Activated T-helper 1 cell treated with anti-CD3 and anti-CD28 coated beads, Interleukin-12 subunit alpha, Interleukin-12 subunit beta, Interleukin-2, Interleukin-4 antibody, amounts not matched to agents 30 ng/mL and 10 ng/mL and 1 ng/mL, durations not matched to agents 14 hours and 24 hours and 36 hours (primary cell): ENCODE measurements at regions of chr5 and their contacts with region 1.

Region 1: DNA sequence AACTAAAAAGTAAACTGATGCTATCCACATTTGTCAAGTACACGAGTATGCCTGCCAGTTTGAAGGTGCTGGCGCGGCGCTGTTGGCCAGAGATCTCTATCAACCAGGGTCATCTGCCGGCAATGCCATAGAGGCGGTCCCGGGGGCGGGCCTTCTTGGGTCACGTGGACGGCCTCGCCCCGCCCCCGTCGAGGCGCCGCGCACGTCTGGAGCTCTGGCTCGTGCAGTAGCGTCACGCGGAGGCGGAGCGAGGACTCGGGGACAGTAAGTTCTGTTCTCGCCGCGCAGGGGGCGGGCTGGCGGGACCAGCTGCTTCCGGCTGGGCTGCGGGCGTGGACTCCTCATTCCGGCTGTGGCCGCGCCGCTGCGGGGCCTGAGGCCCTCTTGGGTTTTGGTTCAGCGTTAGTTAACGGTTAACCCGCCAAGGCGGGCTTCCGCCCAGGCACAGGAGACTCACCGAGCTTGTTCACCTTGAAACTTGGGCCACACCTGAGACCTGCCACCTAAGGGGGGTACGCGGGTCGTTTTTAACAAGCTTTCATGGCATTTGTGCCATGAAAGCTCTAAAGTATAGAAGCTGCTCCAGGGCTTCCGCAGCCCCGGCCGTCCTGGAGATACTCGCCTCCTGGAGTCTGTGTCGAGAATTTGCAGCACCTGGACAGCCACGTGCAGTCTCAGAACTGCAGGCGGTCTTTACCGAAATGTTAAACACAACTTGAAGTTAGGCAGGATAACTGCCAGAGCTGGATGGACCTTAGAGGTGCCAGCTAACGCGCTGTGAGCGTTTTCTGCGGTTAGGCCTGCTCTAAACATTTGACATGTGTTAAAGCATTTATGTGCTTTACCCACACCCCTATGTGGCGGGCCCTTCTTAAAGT is at the start of gene RFESD:
- DNase-seq: peak; percentile 94
- H3K4me3 Mint-ChIP-seq: peak within 1 kb of the TSS; percentile 76
- H3K27ac Mint-ChIP-seq: peak within 1 kb of the TSS; percentile 75
- H3K4me1 Mint-ChIP-seq: peaks cover 27% of the 10 kb centered on the region
- H3K27me3 Mint-ChIP-seq: peaks cover 3% of the 10 kb centered on the region
- total RNA-seq, gene RFESD: 3.0 and 6.0 TPM in 2 replicates

Region 2: DNA sequence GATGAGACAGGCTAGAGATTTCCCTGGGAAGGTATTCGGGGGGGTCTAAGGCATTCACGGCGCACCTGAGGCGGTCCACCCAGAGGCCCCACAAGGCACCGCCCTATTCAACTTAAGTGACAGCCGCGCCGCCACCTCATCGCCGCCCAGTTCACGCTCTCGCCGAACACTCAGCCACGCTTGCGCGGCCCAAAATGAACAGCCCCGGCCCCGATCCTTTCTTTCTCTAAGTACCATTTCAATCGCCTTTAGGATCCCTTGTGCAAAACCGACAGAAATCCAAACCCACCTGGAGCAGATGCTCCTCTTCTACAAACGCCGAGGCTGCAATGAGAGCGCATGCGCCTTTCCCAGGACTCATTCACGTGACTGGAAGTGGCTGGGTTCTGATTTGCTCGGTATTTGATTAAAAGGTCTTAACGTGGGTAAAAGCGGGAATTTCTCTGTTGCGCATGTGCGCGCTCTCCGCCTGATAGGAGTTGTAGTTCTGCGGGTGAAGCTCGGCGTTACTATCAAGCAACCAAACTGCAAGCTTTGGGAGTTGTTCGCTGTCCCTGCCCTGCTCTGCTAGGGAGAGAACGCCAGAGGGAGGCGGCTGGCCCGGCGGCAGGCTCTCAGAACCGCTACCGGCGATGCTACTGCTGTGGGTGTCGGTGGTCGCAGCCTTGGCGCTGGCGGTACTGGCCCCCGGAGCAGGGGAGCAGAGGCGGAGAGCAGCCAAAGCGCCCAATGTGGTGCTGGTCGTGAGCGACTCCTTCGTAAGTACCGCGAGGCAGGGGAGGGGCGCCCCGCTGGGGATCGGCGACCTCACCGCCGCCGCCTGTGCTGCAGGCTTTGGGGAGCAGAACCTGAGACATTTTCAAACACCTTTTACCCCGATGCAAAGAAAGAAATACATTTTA is 91.9 kb before region 1 on chr5 and contains the starts of genes ARSK and SKIC3:
- intact Hi-C with region 1: loop called (anchors 1 kb)
- DNase-seq: peak; percentile 90
- H3K4me3 Mint-ChIP-seq: peak within 1 kb of the TSS; percentile 94
- H3K27ac Mint-ChIP-seq: peak within 1 kb of the TSS; percentile 94
- H3K4me1 Mint-ChIP-seq: peaks cover 39% of the 10 kb centered on the region
- H3K27me3 Mint-ChIP-seq: no peaks in the 10 kb centered on the region
- total RNA-seq, gene ARSK: 3.9 and 4.2 TPM in 2 replicates
- total RNA-seq, gene SKIC3: 60.2 and 63.8 TPM in 2 replicates

Region 3: DNA sequence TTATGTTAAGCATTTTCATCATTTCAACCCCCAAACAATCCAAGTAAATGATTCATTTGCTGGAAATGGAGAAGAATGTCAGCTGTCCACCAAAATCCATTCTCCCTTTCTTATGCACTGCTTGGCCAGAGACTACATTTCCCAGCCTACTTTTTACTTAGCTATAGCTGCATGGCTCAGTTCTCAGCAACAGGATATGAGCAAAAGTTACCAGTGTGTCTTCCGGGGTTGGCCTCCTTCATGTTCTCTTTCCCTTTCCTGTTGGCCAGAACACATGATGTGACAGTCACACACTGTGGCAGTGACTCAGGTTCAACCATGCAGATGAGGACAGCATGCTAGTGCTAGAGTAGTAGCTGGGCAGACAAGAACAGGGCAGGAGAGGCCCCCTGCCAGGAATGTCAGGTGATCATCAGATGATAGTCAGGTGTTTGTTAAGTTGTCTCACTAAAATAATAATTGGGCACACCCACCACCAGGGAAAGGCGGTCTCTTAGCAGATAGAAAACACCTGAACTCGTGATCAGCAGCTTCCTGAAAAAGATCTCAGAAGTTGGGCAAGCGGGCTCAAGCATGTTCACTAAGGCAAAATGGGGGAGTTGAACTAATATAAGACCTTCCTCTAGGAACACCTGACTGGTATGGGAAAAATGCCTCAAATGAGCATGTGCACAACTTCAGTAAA is 14.7 kb before region 1 on chr5:
- intact Hi-C with region 1: loop called (anchors 1 kb)
- DNase-seq: peak; percentile 59
- H3K4me3 Mint-ChIP-seq: peak overlapping the region; percentile 4
- H3K27ac Mint-ChIP-seq: peak overlapping the region; percentile 83
- H3K4me1 Mint-ChIP-seq: peaks cover 13% of the 10 kb centered on the region
- H3K27me3 Mint-ChIP-seq: peaks cover 8% of the 10 kb centered on the region

Region 4: DNA sequence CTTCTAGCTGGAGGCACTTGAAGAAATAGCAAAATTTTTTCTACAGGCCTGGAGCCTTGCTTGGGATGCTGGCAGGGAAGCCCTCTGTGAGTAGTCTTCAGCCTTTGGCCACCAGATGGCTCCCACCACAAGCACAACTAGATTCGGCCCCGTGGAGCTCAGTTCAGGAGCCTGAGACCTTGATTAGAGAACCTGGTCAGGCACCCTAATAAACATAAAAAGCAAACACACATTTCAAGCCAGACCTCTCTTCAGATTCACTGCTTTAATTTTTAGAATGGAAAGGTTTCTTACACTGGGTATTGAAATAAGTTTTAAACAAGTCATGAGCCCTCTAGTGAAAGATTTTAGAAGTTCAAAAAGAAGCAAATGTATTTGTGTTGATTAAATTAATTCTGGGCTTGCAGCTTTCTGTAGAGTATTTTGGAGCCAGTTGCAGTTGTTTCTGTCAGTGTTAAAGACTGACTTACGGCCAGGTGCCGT is 134.3 kb after region 1 on chr5:
- intact Hi-C with region 1: loop called (anchors 1 kb)
- DNase-seq: peak; percentile 47
- H3K4me3 Mint-ChIP-seq: peak overlapping the region; percentile 56
- H3K27ac Mint-ChIP-seq: peak overlapping the region; percentile 29
- H3K4me1 Mint-ChIP-seq: peaks cover 22% of the 10 kb centered on the region
- H3K27me3 Mint-ChIP-seq: peaks cover 2% of the 10 kb centered on the region

Region 5: GRCh38 chr5:95794070-95794516 is 147.3 kb after region 1 on chr5:
- intact Hi-C with region 1: no loop called
- DNase-seq: no peak
- H3K4me3 Mint-ChIP-seq: no peak overlapping the region
- H3K27ac Mint-ChIP-seq: no peak overlapping the region
- H3K4me1 Mint-ChIP-seq: peaks cover 9% of the 10 kb centered on the region
- H3K27me3 Mint-ChIP-seq: peaks cover 10% of the 10 kb centered on the region

Region 6: GRCh38 chr5:95846554-95847260 is 199.9 kb after region 1 on chr5:
- intact Hi-C with region 1: loop called (anchors 1 kb)
- DNase-seq: peak; percentile 44
- H3K4me3 Mint-ChIP-seq: no peak overlapping the region
- H3K27ac Mint-ChIP-seq: no peak overlapping the region
- H3K4me1 Mint-ChIP-seq: peaks cover 37% of the 10 kb centered on the region
- H3K27me3 Mint-ChIP-seq: peaks cover 12% of the 10 kb centered on the region

Region 7: GRCh38 chr5:96662725-96663513 is 1016.1 kb after region 1 on chr5:
- intact Hi-C with region 1: loop called (anchors 1 kb)
- DNase-seq: peak; percentile 82
- H3K4me3 Mint-ChIP-seq: peak overlapping the region; percentile 98
- H3K27ac Mint-ChIP-seq: peak overlapping the region; percentile 98
- H3K4me1 Mint-ChIP-seq: peaks cover 67% of the 10 kb centered on the region
- H3K27me3 Mint-ChIP-seq: peaks cover 11% of the 10 kb centered on the region